ENCODE measurements at regions of chr4 and their contacts with region 1.

Region 1: DNA sequence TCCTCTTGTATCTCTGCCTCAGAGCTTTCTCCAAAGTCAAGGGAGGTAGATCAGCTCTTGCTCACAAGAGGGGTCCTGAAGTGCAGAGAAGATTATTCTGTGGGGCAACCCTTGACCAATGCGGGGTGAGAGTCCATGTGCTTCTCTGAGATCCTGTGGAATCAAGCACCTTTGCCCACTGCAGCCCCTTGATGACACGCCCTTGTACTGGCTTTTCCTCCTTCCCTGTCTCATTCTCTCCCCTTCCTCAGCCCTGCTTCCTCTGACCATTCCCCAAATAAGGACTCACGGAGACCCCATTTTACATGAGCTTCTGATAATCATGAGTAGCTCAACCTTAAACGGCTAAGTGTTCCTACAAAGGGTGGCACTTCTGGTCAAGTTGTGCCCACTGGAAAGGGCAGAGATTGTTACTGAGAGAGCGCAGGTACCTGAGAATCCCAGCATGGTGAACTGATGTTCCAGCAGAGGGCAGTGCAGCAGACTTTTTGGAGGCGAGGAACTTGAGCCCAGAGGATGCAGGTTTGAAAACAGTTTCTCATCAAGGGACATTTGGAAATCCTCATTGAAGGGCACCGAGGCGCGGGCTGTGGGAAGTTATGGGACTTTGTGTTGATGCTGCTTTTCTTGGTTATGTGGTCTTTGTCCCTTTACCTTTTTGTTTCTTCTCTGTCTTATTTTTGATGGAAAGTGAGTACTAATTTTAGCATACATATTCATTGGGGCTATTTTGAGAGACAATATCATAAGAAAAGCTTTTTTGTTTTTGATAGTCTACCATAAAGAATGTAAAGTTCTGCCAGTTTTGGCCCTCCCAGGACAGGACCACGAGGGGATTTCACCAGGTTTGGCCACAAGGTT is 201.3 kb downstream of the RBM46 start:
- DNase-seq: peak; percentile 17 to 91 (median 70)

Region 2: DNA sequence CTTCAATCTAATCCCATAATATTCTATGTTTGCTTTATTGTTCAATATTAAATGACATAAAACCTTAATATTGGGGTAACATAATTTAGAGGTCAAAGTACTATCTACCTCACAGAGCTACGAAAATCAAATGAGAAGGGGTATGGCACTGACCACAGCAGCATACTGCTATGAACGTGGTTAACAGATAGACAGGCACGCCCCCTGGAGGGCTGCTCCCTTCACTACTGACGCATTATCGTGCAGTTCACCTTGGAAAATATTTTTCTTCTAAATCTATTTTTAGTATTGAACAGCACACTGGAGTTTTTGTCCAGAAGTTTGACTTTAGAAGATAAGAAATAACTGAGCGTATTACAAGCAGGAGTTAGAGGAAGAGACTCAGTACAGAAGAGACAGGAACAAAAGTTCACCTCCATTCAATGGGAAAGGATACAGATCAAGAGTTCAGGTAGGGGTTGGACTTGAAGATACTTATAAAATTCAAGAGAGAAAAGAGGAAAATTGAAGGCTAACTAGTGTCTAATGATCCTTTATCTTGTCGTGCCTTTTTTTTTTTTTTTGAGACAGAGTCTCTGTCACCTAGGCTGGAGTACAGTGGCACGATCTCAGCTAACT is 371.6 kb after region 1 on chr4:
- intact Hi-C with region 1: loop called (anchors 1 kb)
- DNase-seq: peak in 9 of 10 donors; percentile 38 to 92 (median 58)

Region 3: GRCh38 chr4:155604718-155605626 is 622.6 kb after region 1 on chr4:
- intact Hi-C with region 1: no loop called
- DNase-seq: no peak